AG04449 (cell line): ENCODE measurements at regions of chr1 and their contacts with region 1.

Region 1: DNA sequence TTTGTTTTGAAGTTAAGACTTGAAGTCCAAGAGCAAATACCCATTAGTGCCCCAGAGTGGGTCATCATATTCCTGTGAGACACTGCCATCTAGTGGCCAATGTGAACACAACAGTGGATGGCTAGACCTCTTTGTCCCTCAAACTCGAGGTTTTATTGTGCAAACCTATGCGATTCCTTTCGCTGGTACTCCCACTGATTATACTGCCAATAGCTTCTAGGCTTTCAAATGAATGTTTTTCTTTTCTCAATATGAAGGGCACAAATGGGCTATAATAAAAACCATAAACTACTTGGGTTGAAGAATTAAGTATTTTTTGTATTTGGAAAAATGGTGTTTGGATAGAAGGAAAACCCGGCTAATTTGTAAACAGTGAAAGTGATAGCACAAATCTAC is 100.4 kb upstream of the ZNF281 start:
- DNase-seq: peak; percentile 41
- H3K4me3 ChIP-seq: no peak overlapping the region
- CTCF ChIP-seq: peak; percentile 73

Region 2: DNA sequence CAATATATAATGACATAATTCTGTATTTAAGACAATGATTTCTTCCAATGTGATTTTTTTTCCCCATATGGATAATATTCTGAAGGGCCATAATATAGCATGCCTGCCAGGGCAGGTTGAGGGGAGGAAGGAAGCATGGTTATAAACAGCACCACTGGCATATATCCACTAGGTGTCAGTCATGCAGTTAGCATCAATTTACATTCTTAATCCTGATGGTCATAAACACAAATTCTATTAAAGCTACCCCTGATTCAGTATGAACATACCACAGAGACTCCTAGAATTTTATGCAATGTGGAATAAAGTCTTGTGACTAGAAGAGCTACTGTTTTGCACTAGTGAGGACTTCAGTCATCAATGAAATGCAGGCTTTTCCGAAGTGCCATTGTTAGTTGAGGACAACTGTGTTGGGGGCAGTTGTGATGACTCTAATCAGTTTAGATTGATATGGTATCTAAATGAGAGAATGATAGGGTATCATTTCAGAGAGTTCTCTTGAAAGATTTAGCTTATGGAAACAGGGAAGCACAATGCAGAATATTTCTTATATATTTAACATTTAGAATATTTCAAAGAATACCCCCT is 825.4 kb before region 1 on chr1:
- CTCF ChIA-PET with region 1: interaction called, 99 read pairs
- POLR2A ChIA-PET with region 1: no interaction called
- DNase-seq: no peak
- H3K4me3 ChIP-seq: no peak overlapping the region
- CTCF ChIP-seq: peak; percentile 72

Region 3: GRCh38 chr1:200139661-200140250 is 370.5 kb before region 1 on chr1:
- CTCF ChIA-PET with region 1: interaction called, 12 read pairs
- POLR2A ChIA-PET with region 1: no interaction called
- DNase-seq: peak; percentile 26
- H3K4me3 ChIP-seq: no peak overlapping the region
- CTCF ChIP-seq: peak; percentile 72

Region 4: GRCh38 chr1:200240656-200241055 is 269.6 kb before region 1 on chr1:
- CTCF ChIA-PET with region 1: no interaction called
- POLR2A ChIA-PET with region 1: no interaction called
- DNase-seq: no peak
- H3K4me3 ChIP-seq: no peak overlapping the region
- CTCF ChIP-seq: no peak

Region 5: GRCh38 chr1:200437556-200438203 is 72.5 kb before region 1 on chr1:
- CTCF ChIA-PET with region 1: no interaction called
- POLR2A ChIA-PET with region 1: no interaction called
- DNase-seq: no peak
- H3K4me3 ChIP-seq: no peak overlapping the region
- CTCF ChIP-seq: no peak

Region 6: GRCh38 chr1:200496937-200497336 is 13.3 kb before region 1 on chr1:
- CTCF ChIA-PET with region 1: interaction called, 42 read pairs
- POLR2A ChIA-PET with region 1: no interaction called
- DNase-seq: no peak
- H3K4me3 ChIP-seq: no peak overlapping the region
- CTCF ChIP-seq: no peak